ENCODE measurements at regions of chr16 and their contacts with region 1.

Region 1: DNA sequence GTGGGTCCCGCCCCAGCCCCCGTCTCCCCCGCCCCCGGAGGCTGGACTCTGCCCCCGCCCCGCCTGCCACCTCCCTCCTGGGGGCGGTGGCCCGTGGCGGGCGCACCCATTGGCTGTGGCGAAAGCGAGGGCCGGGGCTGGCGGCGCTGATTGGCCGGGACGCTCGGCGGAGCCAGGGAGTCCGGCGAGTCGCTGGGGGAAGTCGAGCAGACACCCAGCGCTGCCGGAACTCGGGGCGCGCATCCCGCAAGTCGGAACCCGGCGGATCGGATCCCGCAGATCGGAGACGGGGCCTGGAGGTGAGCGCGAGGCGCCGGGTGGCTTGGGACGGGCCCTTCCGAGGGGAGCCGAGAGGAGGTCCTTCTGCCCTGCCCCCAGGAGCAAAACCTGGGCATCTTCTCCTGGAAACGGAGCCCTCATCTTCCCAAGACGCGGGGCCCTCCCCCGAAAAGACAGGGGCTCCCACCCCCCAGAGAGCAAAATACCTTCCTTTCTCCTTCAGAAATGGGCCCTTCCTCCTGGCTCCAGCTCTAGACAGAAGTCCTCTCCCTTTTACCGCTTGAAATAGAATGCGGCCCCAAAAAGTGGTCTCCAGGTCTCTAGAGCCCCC is at the start of gene ABAT:
- DNase-seq: peak; percentile 95 to 97
- ATAC-seq: peak; percentile 98
- H3K4me3 ChIP-seq: peak within 1 kb of the TSS; percentile 76 to 79
- H3K27ac ChIP-seq: peak within 1 kb of the TSS in 1 of 2 donors; percentile 34
- H3K4me1 ChIP-seq: no peaks in the 10 kb centered on the region
- H3K27me3 ChIP-seq: no peaks in the 10 kb centered on the region
- total RNA-seq, gene ABAT: 10.3 to 11.5 TPM

Region 2: GRCh38 chr16:8621572-8622314 is 52.8 kb before region 1 on chr16 and contains the start of gene METTL22:
- intact Hi-C with region 1: loop called (anchors 2 to 5 kb)
- DNase-seq: peak; percentile 94 to 98
- ATAC-seq: peak; percentile 98
- H3K4me3 ChIP-seq: peak within 1 kb of the TSS; percentile 45 to 77
- H3K27ac ChIP-seq: peak within 1 kb of the TSS in 1 of 2 donors; percentile 41
- H3K4me1 ChIP-seq: no peaks in the 10 kb centered on the region
- H3K27me3 ChIP-seq: no peaks in the 10 kb centered on the region
- total RNA-seq, gene METTL22: 39.6 to 42.8 TPM

Region 3: DNA sequence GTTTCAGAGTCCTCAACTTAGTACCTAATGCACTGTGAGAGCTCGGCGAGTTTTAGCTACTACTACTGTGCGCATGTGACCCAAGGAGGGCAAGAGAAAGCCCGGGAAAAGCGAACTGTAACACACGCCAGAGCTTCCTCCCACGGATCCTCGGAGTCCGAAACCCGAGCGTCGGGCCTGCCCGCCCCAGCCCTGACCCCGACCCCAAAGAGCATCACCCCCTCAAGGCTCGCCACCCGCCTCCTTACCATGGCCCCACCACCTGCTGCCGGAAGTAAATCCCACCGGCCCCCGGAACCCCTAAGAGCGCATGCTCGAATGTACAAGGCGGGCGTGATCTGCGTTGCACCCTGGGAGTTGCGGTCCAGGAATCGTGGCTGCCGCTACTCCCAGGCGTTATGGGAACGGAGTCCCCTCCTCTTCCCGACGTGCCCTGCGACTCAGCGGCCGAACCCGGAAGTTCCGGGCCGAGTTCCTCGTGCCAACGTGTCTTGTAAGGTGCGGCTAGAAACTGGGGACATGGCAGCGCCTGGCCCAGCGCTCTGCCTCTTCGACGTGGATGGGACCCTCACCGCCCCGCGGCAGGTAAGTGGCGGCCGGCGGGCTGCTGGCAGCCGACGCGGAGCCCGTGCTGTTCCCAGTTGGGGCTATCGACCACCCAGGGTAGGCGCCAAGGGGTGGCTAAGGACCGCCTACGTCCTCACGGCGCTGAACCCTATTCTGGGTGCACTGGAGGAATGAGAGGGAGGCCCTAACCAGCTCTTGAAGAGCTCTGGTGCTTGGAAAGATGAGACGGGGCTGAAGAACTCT is 123.1 kb after region 1 on chr16 and contains the starts of genes PMM2 and TMEM186:
- intact Hi-C with region 1: loop called (anchors 5 to 10 kb)
- DNase-seq: peak; percentile 98
- ATAC-seq: peak; percentile 98
- H3K4me3 ChIP-seq: peak within 1 kb of the TSS; percentile 86 to 94
- H3K27ac ChIP-seq: peak within 1 kb of the TSS in 1 of 2 donors; percentile 45
- H3K4me1 ChIP-seq: peaks cover 0 to 2% of the 10 kb centered on the region in 2 donors
- H3K27me3 ChIP-seq: no peaks in the 10 kb centered on the region
- total RNA-seq, gene PMM2: 43.1 to 48.4 TPM
- total RNA-seq, gene TMEM186: 5.7 to 7.0 TPM

Region 4: GRCh38 chr16:9351440-9351839 is 676.9 kb after region 1 on chr16:
- intact Hi-C with region 1: no loop called
- DNase-seq: no peak
- ATAC-seq: no peak
- H3K4me3 ChIP-seq: no peak overlapping the region
- H3K27ac ChIP-seq: no peak overlapping the region
- H3K4me1 ChIP-seq: no peaks in the 10 kb centered on the region
- H3K27me3 ChIP-seq: no peaks in the 10 kb centered on the region

Measured in aorta (tissue), 5 donors.